Activated CD8-positive, alpha-beta memory T cell treated with anti-CD3 and anti-CD28 coated beads, Interleukin-2, amount 10 ng/mL, durations not matched to agents 7 days and 5 days (primary cell): ENCODE measurements at regions of chr16 and their contacts with region 1.

Region 1: GRCh38 chr16:84754353-84754856 is 54.6 kb downstream of the USP10 start:
- DNase-seq: peak; percentile 85
- ATAC-seq: peak; percentile 77
- H3K4me3 Mint-ChIP-seq: peak overlapping the region; percentile 62
- H3K27ac Mint-ChIP-seq: peak overlapping the region; percentile 83
- H3K4me1 Mint-ChIP-seq: peaks cover 71% of the 10 kb centered on the region
- H3K27me3 Mint-ChIP-seq: no peaks in the 10 kb centered on the region

Region 2: DNA sequence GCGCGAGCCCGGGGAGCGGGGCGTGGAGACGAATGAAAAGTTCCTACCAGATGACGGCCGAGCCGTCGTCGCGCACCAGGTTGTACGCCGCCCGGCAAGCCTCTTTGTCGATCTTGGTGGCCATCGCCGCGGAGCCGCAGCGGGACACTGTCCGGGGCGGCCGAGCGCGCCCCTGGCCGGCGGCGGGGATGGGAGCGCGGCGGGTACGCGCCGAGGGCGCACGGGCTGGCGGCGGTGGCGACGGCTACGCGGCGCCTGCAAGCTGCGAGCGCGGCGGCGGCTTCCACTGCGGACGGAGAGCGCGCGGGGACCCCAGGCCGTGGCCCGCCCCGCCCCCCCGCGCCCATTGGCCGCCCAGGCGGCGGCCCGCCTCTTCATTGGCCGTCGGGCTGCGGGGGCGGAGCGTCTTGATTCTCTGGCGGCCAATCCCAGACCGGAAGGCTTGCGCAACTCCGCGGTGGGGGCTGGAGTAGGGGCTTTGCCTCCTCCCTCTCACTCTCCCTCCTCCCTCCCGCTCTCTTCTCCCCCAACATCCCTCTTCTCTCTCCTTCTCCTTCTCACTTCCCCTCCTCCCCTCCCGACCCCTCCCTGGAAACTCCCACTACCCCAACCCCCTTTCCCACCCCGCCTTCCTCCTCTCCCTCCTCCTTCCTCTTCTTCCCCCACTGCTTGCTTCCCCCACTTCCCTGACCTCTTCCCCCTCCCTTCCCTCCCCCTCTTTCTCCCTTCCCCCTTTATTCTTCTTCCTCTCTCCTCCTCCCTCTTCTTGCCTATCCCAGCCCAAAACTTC is 136.4 kb before region 1 on chr16 and contains the start of gene COTL1:
- CTCF ChIA-PET with region 1: interaction called, 16 read pairs
- DNase-seq: peak; percentile 97
- ATAC-seq: peak; percentile 86
- H3K4me3 Mint-ChIP-seq: peak within 1 kb of the TSS; percentile 96
- H3K27ac Mint-ChIP-seq: peak within 1 kb of the TSS; percentile 87
- H3K4me1 Mint-ChIP-seq: peaks cover 41% of the 10 kb centered on the region
- H3K27me3 Mint-ChIP-seq: peaks cover 13% of the 10 kb centered on the region
- total RNA-seq, gene COTL1: 1,052 to 1,190 TPM

Region 3: DNA sequence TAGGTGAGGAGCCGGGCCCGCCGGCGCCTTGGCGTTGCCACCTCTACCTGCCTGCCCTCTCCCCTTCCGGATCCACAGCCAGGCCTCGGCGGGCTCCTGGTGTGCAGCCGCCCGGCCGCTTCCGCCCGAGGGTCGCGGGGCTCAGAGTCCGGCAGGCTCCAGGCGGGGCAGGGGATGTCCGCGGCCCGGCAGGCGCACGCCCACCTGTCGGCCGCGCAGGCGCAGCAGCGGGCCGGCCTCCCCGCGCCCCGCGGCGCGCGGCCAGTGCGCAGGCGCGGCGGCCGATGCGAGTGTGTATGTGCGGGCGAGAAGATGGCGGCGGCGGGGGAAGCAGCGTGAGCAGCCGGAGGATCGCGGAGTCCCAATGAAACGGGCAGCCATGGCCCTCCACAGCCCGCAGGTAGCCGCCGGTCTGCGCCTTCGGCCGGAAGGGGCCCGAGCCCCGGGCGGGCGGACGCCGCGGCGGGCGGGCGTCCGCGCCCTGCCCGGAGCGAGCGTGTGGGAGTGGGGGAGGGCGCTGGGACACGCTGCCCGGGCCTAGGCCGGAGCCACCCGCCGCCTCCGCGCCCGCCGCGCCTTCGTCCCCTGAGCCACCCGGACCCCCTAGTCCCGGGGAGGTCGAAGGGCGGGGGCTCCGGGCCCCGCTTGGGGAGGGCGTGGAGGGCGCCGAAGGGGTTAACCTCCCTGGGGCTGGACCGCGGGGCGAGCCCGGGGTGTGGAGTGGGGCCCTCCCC is 54.5 kb before region 1 on chr16 and contains the start of gene USP10:
- CTCF ChIA-PET with region 1: no interaction called
- DNase-seq: peak; percentile 85
- ATAC-seq: peak; percentile 90
- H3K4me3 Mint-ChIP-seq: peak within 1 kb of the TSS; percentile 98
- H3K27ac Mint-ChIP-seq: peak within 1 kb of the TSS; percentile 96
- H3K4me1 Mint-ChIP-seq: peaks cover 40% of the 10 kb centered on the region
- H3K27me3 Mint-ChIP-seq: no peaks in the 10 kb centered on the region
- total RNA-seq, gene USP10: 90.9 to 117 TPM

Region 4: DNA sequence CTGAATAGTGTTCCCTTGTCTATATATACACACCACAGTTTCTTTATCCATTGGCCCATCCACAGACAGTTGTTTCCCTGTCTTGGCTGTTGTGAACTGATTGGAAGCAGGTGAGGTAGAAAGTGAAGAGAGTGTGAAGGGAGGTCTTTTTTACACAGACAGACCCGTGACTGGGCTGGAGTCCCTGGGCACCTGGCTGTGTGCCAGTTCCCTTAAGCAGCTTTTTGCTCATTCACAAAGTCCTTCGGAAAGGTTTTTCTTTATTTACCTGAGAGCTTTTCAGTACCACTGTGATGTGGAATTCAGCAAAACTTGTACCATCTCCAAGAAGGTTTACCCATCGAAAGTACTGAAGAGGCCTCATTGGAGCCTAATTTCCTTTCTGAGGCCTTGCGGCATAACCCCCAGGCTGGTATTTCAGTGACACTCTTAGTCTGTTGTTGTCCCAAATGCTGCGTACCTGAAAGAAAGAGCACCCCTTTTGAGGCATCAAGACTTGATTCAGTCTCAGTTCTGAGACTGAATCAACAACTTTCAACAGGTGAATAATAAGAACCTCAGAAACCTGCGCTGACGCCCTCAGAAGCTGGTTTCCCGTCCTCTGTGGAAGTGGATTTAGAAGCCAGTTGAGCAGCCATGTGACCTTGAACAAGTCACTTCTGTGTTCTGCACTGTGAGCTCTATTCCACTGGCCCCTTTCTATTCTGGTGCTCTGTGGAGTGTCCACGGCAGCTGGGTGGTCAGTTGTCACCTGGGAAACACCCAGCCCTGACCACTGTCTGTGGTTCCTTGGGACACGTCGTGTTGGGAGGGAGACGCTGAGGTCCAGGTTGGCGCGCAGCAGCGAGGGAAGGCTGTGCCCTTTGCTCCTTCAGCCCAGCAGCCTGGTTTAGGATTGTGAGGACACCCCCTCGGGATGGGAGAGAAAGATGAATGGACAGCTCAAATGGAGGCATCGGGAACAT is 11.5 kb after region 1 on chr16:
- CTCF ChIA-PET with region 1: interaction called, 20 read pairs
- DNase-seq: no peak
- ATAC-seq: no peak
- H3K4me3 Mint-ChIP-seq: no peak overlapping the region
- H3K27ac Mint-ChIP-seq: no peak overlapping the region
- H3K4me1 Mint-ChIP-seq: peaks cover 23% of the 10 kb centered on the region
- H3K27me3 Mint-ChIP-seq: no peaks in the 10 kb centered on the region

Region 5: DNA sequence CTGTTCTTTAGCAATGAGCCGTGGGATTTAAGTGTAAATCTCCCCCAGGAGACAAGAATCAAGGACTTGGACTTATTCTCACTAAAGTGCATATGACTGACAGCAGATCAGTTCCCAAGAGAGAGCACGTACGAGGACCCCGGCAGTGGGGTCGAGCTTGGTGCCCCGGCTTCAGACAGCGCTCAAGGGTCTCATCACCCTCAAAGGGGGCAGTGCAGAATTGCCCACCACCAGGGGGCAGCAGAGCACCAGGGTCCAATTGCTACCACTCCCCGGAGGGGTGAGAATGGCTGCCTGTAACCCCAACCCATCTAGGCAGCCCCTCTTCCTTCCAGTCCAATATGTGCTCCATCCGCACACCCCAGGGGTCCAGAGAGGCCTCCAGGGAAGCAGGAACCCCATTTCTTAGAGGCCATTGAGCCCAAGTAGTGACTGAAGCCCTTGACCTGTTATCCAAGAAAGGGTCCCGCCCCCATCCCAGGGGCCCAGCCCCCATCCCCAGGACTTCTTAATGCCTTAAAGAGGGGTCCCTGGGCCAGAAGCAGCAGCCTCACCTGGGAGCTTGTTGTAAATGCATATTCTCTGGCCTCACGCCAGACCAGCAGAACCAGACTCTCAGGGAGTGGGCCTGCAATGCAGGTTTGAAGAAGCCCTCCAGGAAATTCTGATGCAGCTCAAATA is 170.8 kb after region 1 on chr16:
- CTCF ChIA-PET with region 1: interaction called, 10 read pairs
- DNase-seq: peak; percentile 74
- ATAC-seq: peak; percentile 64
- H3K4me3 Mint-ChIP-seq: no peak overlapping the region
- H3K27ac Mint-ChIP-seq: no peak overlapping the region
- H3K4me1 Mint-ChIP-seq: no peaks in the 10 kb centered on the region
- H3K27me3 Mint-ChIP-seq: no peaks in the 10 kb centered on the region

Region 6: DNA sequence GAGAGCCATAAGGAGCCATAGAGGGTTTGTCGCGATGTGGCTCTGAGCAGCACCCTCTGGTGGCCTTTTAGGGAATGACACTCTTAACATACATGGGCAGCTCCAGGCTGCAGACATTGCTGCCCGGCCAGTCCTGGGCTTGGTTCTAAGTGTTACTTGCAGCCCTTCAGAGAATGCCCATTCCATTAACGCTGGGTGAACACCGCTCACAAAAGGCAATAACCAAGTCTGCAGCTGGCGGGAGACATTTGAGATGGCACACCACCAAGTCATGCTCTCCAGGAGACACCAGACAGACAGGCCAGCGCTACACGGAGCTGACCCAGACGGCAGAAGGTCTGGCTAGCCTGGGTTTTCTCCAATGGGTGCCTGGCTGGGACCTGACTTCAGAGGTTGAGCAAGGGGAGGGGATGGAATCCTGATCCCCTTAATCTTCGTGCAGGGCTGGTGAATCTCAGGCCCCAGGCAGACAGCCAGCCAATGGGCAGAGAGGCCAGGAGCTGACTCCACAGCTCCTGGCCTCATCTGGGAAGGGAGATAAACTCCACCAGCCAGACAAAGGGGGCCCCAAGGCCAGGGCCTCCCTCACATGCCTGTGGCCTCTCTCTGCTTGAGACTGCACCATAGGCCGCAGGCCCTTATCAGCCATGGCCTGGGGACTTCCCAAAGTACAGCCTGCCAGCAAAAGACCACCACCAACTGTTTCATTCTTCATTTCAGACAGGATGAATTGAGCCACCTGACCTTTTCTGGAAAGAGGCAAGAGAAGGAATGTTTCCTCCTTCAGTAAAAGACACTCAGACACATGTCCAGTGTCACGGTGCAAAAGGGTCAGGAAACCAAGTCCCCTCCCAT is 198.2 kb after region 1 on chr16:
- CTCF ChIA-PET with region 1: interaction called, 106 read pairs
- DNase-seq: peak; percentile 77
- ATAC-seq: peak; percentile 85
- H3K4me3 Mint-ChIP-seq: no peak overlapping the region
- H3K27ac Mint-ChIP-seq: no peak overlapping the region
- H3K4me1 Mint-ChIP-seq: no peaks in the 10 kb centered on the region
- H3K27me3 Mint-ChIP-seq: peaks cover 3% of the 10 kb centered on the region

Region 7: GRCh38 chr16:84970447-84971127 is 216.2 kb after region 1 on chr16:
- CTCF ChIA-PET with region 1: interaction called, 111 read pairs
- DNase-seq: peak; percentile 82
- ATAC-seq: peak; percentile 97
- H3K4me3 Mint-ChIP-seq: no peak overlapping the region
- H3K27ac Mint-ChIP-seq: no peak overlapping the region
- H3K4me1 Mint-ChIP-seq: no peaks in the 10 kb centered on the region
- H3K27me3 Mint-ChIP-seq: peaks cover 2% of the 10 kb centered on the region